CD14-positive monocyte (primary cell): ENCODE measurements at regions of chr5 and their contacts with region 1.

Region 1: GRCh38 chr5:179795863-179796833 is 2.4 kb downstream of the LTC4S start:
- DNase-seq: peak; percentile 84 to 89 (median 85)
- H3K4me3 ChIP-seq: peak overlapping the region; percentile 17 to 74 (median 32)
- H3K4me3 Mint-ChIP-seq: peak overlapping the region; percentile 64 to 75
- H3K27ac ChIP-seq: peak overlapping the region in 1 of 2 donors; percentile 4
- H3K27ac Mint-ChIP-seq: no peak overlapping the region
- H3K4me1 ChIP-seq: peaks cover 52 to 55% of the 10 kb centered on the region in 2 donors
- H3K4me1 Mint-ChIP-seq: peaks cover 42% of the 10 kb centered on the region
- H3K27me3 ChIP-seq: no peaks in the 10 kb centered on the region
- H3K27me3 Mint-ChIP-seq: peaks cover 0 to 2% (median 0%) of the 10 kb centered on the region in 3 donors
- CTCF ChIP-seq: peak; percentile 88

Region 2: GRCh38 chr5:179732417-179732917 is 63.7 kb before region 1 on chr5 and contains the start of gene MAML1:
- intact Hi-C with region 1: loop called in 1 of 2 experiments (anchors 10 kb)
- DNase-seq: peak; percentile 99 to 100 (median 100)
- H3K4me3 ChIP-seq: peak within 1 kb of the TSS; percentile 69 to 90 (median 70)
- H3K4me3 Mint-ChIP-seq: peak within 1 kb of the TSS; percentile 92 to 96
- H3K27ac ChIP-seq: peak within 1 kb of the TSS; percentile 97 to 98
- H3K27ac Mint-ChIP-seq: peak within 1 kb of the TSS; percentile 95 to 99 (median 97)
- H3K4me1 ChIP-seq: peaks cover 39 to 60% of the 10 kb centered on the region in 2 donors
- H3K4me1 Mint-ChIP-seq: peaks cover 58% of the 10 kb centered on the region
- H3K27me3 ChIP-seq: no peaks in the 10 kb centered on the region
- H3K27me3 Mint-ChIP-seq: no peaks in the 10 kb centered on the region
- CTCF ChIP-seq: no peak
- polyA plus RNA-seq, gene MAML1: 2.2 to 11.0 (median 2.7) TPM

Region 3: GRCh38 chr5:179763215-179763945 is 32.8 kb before region 1 on chr5:
- intact Hi-C with region 1: loop called (anchors 2 kb)
- DNase-seq: peak; percentile 49 to 61 (median 50)
- H3K4me3 ChIP-seq: no peak overlapping the region
- H3K4me3 Mint-ChIP-seq: peak overlapping the region in 1 of 2 donors; percentile 26
- H3K27ac ChIP-seq: peak overlapping the region in 1 of 2 donors; percentile 60
- H3K27ac Mint-ChIP-seq: peak overlapping the region in 5 of 7 donors; percentile 14 to 68 (median 46)
- H3K4me1 ChIP-seq: peaks cover 94 to 98% of the 10 kb centered on the region in 2 donors
- H3K4me1 Mint-ChIP-seq: peaks cover 95% of the 10 kb centered on the region
- H3K27me3 ChIP-seq: no peaks in the 10 kb centered on the region
- H3K27me3 Mint-ChIP-seq: peaks cover 0 to 6% (median 0%) of the 10 kb centered on the region in 3 donors
- CTCF ChIP-seq: peak; percentile 92

Region 4: GRCh38 chr5:179777909-179778308 is 18.2 kb before region 1 on chr5:
- intact Hi-C with region 1: loop called in 1 of 2 experiments (anchors 2 kb)
- DNase-seq: peak; percentile 56 to 86 (median 85)
- H3K4me3 ChIP-seq: peak overlapping the region in 1 of 3 experiments; percentile 46
- H3K4me3 Mint-ChIP-seq: peak overlapping the region; percentile 13 to 61
- H3K27ac ChIP-seq: peak overlapping the region; percentile 30 to 78
- H3K27ac Mint-ChIP-seq: peak overlapping the region; percentile 68 to 95 (median 91)
- H3K4me1 ChIP-seq: peaks cover 69 to 80% of the 10 kb centered on the region in 2 donors
- H3K4me1 Mint-ChIP-seq: peaks cover 73% of the 10 kb centered on the region
- H3K27me3 ChIP-seq: no peaks in the 10 kb centered on the region
- H3K27me3 Mint-ChIP-seq: peaks cover 0 to 2% (median 0%) of the 10 kb centered on the region in 3 donors
- CTCF ChIP-seq: no peak

Region 5: GRCh38 chr5:179867476-179867875 is 71.3 kb after region 1 on chr5:
- intact Hi-C with region 1: no loop called
- DNase-seq: no peak
- H3K4me3 ChIP-seq: no peak overlapping the region
- H3K4me3 Mint-ChIP-seq: no peak overlapping the region
- H3K27ac ChIP-seq: no peak overlapping the region
- H3K27ac Mint-ChIP-seq: peak overlapping the region in 5 of 7 donors; percentile 28 to 84 (median 77)
- H3K4me1 ChIP-seq: no peaks in the 10 kb centered on the region
- H3K4me1 Mint-ChIP-seq: peaks cover 8% of the 10 kb centered on the region
- H3K27me3 ChIP-seq: no peaks in the 10 kb centered on the region
- H3K27me3 Mint-ChIP-seq: peaks cover 0 to 2% (median 0%) of the 10 kb centered on the region in 3 donors
- CTCF ChIP-seq: no peak

Region 6: DNA sequence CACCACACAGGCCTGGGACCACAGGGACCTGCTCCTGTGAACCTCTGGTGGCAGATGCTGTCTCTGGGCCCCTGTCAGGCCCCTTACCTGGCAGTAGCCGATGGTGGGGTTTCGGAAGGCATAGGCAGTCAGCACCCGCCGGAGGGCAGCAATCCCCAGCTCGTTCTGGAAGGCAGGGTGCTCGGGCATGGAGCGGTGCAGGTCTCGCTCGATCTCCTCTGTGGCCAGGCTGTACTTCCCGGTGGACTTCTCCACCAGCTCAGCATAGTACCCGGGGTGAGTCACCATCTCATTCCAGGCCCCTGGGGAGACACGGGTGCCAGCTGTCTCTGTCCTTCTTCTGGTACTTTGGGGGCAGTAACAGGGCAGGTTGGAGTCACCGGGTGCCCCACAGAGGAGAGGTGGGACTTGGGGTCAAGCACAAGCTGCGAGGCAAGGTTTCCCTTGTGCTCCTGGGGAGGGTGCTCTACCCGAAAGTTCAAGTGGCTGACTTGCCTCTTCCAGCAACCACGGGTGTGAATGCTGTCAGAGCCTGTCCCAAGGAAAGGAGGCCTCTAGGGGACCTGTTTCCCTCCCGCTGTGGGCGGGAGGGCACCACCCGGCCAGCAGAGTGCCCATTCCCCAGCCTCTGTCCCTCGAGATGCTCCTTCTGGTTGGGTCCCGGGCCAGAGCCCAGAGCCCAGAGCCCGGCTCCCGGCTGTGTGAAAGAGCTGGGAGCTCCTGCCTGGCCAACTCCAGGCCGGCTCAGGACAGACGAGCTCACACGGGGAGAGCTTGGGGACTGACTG is 82.3 kb after region 1 on chr5:
- intact Hi-C with region 1: no loop called
- DNase-seq: no peak
- H3K4me3 ChIP-seq: no peak overlapping the region
- H3K4me3 Mint-ChIP-seq: no peak overlapping the region
- H3K27ac ChIP-seq: no peak overlapping the region
- H3K27ac Mint-ChIP-seq: peak overlapping the region in 1 of 7 donors; percentile 12
- H3K4me1 ChIP-seq: peaks cover 9 to 10% of the 10 kb centered on the region in 2 donors
- H3K4me1 Mint-ChIP-seq: peaks cover 9% of the 10 kb centered on the region
- H3K27me3 ChIP-seq: no peaks in the 10 kb centered on the region
- H3K27me3 Mint-ChIP-seq: peaks cover 0 to 1% (median 0%) of the 10 kb centered on the region in 3 donors
- CTCF ChIP-seq: no peak